Activated B cell treated with CpG ODN at 0.5 μM for 24 hours (primary cell): ENCODE measurements at regions of chr20 and their contacts with region 1.

Region 1: DNA sequence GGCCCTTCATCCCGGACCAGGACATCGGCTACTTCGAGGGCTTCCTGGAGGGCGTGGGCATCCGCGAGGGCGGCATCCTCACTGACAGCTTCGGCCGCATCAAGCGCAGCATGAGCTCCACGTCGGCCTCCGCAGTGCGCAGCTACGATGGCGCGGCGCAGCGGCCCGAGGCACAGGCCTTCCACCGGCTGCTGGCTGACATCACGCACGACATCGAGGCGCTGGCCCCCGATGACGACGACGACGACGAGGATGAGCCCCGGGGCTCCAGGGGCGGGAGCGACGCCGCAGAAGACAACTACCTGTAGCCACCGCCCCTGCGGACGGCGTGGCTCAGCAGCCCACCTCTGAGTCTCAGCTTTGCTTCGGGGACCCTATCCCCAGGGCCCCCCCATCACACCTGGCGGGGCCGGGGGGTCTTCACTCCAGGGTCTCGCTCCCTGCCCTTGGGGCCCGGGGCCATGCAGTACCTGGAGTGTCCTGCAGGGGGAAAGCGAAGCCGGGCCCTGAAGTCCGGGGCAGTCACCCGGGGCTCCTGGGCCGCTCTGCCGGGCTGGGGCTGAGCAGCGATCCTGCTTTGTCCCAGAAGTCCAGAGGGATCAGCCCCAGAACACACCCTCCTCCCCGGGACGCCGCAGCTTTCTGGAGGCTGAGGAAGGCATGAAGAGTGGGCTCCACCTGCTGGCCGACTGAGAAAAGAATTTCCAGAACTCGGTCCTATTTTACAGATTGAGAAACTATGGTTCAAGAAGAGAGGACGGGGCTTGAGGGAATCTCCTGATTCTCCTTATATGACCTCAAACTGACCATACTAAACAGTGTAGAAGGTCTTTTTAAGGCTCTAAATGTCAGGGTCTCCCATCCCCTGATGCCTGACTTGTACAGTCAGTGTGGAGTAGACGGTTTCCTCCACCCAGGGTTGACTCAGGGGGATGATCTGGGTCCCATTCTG is 20.8 kb upstream of the HCK start:
- DNase-seq: peak; percentile 67
- ATAC-seq: peak; percentile 56
- H3K4me3 Mint-ChIP-seq: peak overlapping the region; percentile 71
- H3K27ac Mint-ChIP-seq: no peak overlapping the region
- H3K4me1 Mint-ChIP-seq: peaks cover 33% of the 10 kb centered on the region
- H3K27me3 Mint-ChIP-seq: peaks cover 3% of the 10 kb centered on the region
- CTCF ChIP-seq: peak; percentile 100

Region 2: GRCh38 chr20:31851240-31851955 is 179.9 kb before region 1 on chr20:
- CTCF ChIA-PET with region 1: interaction called, 47 read pairs
- POLR2A ChIA-PET with region 1: no interaction called
- intact Hi-C with region 1: loop called (anchors 1 kb)
- DNase-seq: no peak
- ATAC-seq: no peak
- H3K4me3 Mint-ChIP-seq: no peak overlapping the region
- H3K27ac Mint-ChIP-seq: no peak overlapping the region
- H3K4me1 Mint-ChIP-seq: no peaks in the 10 kb centered on the region
- H3K27me3 Mint-ChIP-seq: peaks cover 25% of the 10 kb centered on the region
- CTCF ChIP-seq: no peak

Region 3: GRCh38 chr20:31951530-31952453 is 79.5 kb before region 1 on chr20 and contains the start of gene PDRG1:
- CTCF ChIA-PET with region 1: interaction called, 20 read pairs
- POLR2A ChIA-PET with region 1: no interaction called
- intact Hi-C with region 1: loop called (anchors 1 kb)
- DNase-seq: peak; percentile 99
- ATAC-seq: peak; percentile 99
- H3K4me3 Mint-ChIP-seq: peak within 1 kb of the TSS; percentile 99
- H3K27ac Mint-ChIP-seq: peak within 1 kb of the TSS; percentile 95
- H3K4me1 Mint-ChIP-seq: peaks cover 30% of the 10 kb centered on the region
- H3K27me3 Mint-ChIP-seq: peaks cover 11% of the 10 kb centered on the region
- CTCF ChIP-seq: peak; percentile 51
- total RNA-seq, gene PDRG1: 16.4 and 18.7 TPM in 2 replicates

Region 4: DNA sequence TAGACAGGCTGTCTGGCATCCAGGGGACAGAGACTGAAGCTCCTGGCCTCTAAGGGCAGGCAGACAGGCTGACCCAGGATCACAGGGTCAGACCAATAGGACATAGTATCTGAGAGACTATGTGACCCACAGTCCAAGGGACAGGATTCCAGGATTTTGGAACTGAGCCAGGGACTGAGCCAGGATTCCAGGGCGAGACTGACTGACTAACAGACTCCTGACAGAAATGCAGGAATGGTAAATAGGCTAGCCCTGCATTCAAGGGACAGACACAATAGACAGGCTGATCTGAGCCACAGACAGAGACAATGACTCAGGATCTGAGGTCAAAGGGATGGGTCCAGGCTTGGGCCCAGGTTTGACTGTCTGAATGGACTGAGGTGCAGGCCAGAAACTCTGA is 43.5 kb before region 1 on chr20:
- CTCF ChIA-PET with region 1: no interaction called
- POLR2A ChIA-PET with region 1: no interaction called
- intact Hi-C with region 1: no loop called
- DNase-seq: no peak
- ATAC-seq: no peak
- H3K4me3 Mint-ChIP-seq: no peak overlapping the region
- H3K27ac Mint-ChIP-seq: no peak overlapping the region
- H3K4me1 Mint-ChIP-seq: no peaks in the 10 kb centered on the region
- H3K27me3 Mint-ChIP-seq: peaks cover 12% of the 10 kb centered on the region
- CTCF ChIP-seq: no peak

Region 5: GRCh38 chr20:32018269-32019074 is 12.8 kb before region 1 on chr20:
- CTCF ChIA-PET with region 1: interaction called, 9 read pairs
- POLR2A ChIA-PET with region 1: interaction called, 4 read pairs
- intact Hi-C with region 1: loop called (anchors 1 kb)
- DNase-seq: peak; percentile 55
- ATAC-seq: peak; percentile 71
- H3K4me3 Mint-ChIP-seq: peak overlapping the region; percentile 85
- H3K27ac Mint-ChIP-seq: no peak overlapping the region
- H3K4me1 Mint-ChIP-seq: peaks cover 23% of the 10 kb centered on the region
- H3K27me3 Mint-ChIP-seq: peaks cover 56% of the 10 kb centered on the region
- CTCF ChIP-seq: no peak

Region 6: GRCh38 chr20:32062776-32063170 is 31.5 kb after region 1 on chr20:
- CTCF ChIA-PET with region 1: interaction called, 17 read pairs
- POLR2A ChIA-PET with region 1: interaction called, 453 read pairs
- intact Hi-C with region 1: loop called (anchors 1 kb)
- DNase-seq: no peak
- ATAC-seq: peak; percentile 84
- H3K4me3 Mint-ChIP-seq: peak overlapping the region; percentile 35
- H3K27ac Mint-ChIP-seq: peak overlapping the region; percentile 75
- H3K4me1 Mint-ChIP-seq: peaks cover 54% of the 10 kb centered on the region
- H3K27me3 Mint-ChIP-seq: no peaks in the 10 kb centered on the region
- CTCF ChIP-seq: no peak

Region 7: DNA sequence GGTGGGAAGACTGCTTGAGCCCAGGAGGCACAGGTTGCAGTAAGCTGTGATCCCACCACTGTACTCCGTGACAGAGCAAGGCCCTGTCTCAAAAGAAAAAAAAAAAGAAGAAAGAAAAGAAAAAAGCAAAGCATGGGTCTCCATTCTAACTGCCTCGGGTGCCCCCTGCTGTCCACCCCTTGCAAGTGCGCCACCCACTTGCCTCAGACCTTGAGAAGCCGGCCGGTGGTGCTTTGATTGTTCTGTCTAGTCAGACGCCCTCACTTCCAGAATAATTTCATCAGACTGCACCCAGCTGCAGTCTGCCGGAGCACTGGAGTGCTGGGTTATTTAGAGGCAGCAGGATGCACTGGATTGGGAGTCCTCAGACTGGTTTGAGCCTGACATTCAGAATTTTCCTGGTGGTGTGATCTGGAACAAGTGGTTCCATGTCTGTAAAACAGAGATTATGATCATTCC is 60.6 kb after region 1 on chr20:
- CTCF ChIA-PET with region 1: interaction called, 96 read pairs
- POLR2A ChIA-PET with region 1: interaction called, 30 read pairs
- intact Hi-C with region 1: loop called (anchors 1 kb)
- DNase-seq: peak; percentile 68
- ATAC-seq: peak; percentile 92
- H3K4me3 Mint-ChIP-seq: no peak overlapping the region
- H3K27ac Mint-ChIP-seq: no peak overlapping the region
- H3K4me1 Mint-ChIP-seq: peaks cover 14% of the 10 kb centered on the region
- H3K27me3 Mint-ChIP-seq: no peaks in the 10 kb centered on the region
- CTCF ChIP-seq: peak; percentile 70

Region 8: DNA sequence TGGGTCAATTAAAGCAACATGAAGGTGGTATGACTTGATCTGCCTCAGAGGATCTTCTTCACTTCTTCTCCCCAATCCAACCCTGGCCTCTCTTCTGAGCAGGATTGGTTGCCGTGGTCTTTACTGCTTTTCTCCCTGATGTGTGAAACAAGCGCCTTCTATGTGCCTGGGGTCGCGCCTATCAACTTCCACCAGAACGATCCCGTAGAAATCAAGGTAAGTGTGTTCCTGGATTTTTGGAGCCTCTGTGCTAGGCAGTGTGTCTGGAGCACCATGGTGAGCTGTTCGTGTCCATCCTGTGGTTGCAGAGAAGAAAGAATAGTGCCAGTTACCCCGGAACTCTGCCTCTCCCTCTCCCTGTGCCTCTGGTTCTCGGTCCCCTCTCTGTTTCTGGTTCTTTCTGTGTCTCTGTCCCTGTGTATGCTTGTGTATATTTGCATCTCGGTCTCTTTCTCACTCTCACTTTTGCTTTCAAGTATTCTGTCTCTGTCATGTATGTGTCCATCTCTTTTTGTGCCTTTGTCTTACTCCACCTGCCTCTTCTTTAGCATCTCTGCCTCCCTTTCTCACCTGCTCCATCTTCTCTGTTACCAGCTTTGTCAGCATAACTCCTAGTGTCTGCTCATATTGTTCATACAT is 101.7 kb after region 1 on chr20:
- CTCF ChIA-PET with region 1: no interaction called
- POLR2A ChIA-PET with region 1: no interaction called
- intact Hi-C with region 1: no loop called
- DNase-seq: no peak
- ATAC-seq: no peak
- H3K4me3 Mint-ChIP-seq: no peak overlapping the region
- H3K27ac Mint-ChIP-seq: no peak overlapping the region
- H3K4me1 Mint-ChIP-seq: peaks cover 16% of the 10 kb centered on the region
- H3K27me3 Mint-ChIP-seq: no peaks in the 10 kb centered on the region
- CTCF ChIP-seq: no peak

Region 9: GRCh38 chr20:32652739-32653526 is 621.6 kb after region 1 on chr20:
- CTCF ChIA-PET with region 1: no interaction called
- POLR2A ChIA-PET with region 1: no interaction called
- intact Hi-C with region 1: loop called (anchors 5 kb)
- DNase-seq: peak; percentile 79
- ATAC-seq: peak; percentile 97
- H3K4me3 Mint-ChIP-seq: no peak overlapping the region
- H3K27ac Mint-ChIP-seq: no peak overlapping the region
- H3K4me1 Mint-ChIP-seq: peaks cover 8% of the 10 kb centered on the region
- H3K27me3 Mint-ChIP-seq: peaks cover 3% of the 10 kb centered on the region
- CTCF ChIP-seq: peak; percentile 74